Natural killer cell (primary cell): ENCODE measurements at regions of chr12 and their contacts with region 1.

Region 1: GRCh38 chr12:121678716-121679580 is 9.5 kb upstream of the MORN3 start:
- DNase-seq: no peak
- ATAC-seq: no peak
- H3K4me3 ChIP-seq: no peak overlapping the region
- H3K4me3 Mint-ChIP-seq: no peak overlapping the region
- H3K27ac ChIP-seq: no peak overlapping the region
- H3K27ac Mint-ChIP-seq: peak overlapping the region in 1 of 2 donors; percentile 71
- H3K4me1 ChIP-seq: peaks cover 9% of the 10 kb centered on the region
- H3K4me1 Mint-ChIP-seq: peaks cover 0 to 5% of the 10 kb centered on the region in 2 donors
- H3K27me3 ChIP-seq: no peaks in the 10 kb centered on the region
- H3K27me3 Mint-ChIP-seq: no peaks in the 10 kb centered on the region
- CTCF ChIP-seq: no peak

Region 2: DNA sequence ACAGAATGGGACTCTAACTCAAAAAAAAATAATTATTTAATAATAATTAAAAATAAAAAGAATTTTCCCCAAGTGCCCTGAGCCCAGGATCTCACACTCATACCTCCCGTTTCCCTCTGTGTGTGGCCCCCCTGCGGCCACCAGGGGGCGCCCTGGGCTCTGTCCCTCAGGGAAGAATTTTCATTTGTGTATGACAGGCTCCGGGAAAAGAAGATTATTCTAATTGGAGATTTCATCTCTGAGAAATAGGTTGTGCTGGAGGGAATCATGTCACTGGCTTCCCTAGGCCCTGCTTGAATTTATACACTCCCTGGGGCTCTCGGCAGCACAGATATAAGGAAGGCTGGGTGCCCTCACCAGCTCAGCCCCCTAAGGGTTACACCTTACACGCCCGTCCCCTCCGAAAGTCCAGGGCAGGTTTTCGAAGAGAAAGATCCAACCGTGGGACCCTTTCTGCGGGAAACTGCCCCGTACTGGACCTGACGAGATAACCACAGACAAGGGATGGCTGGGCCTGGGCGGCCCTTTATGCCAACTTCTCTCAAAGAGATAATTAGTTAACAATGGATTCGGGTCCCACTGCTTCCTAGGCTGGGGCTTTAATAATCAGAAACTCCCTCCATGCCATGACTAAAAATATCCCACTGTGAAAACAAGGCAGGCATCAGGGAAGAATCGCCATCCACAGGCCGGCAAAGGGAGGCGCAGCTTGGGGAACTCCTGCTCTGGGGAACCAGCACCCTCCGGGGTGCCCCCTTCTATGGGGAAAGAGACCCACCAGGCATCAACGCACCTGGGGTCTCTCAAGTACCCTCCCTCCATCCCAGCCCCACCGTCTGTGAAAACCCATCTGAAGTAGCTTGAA is 178.8 kb before region 1 on chr12:
- intact Hi-C with region 1: loop called (anchors 1 kb)
- DNase-seq: peak; percentile 76 to 87
- ATAC-seq: peak; percentile 74 to 78 (median 75)
- H3K4me3 ChIP-seq: no peak overlapping the region
- H3K4me3 Mint-ChIP-seq: no peak overlapping the region
- H3K27ac ChIP-seq: no peak overlapping the region
- H3K27ac Mint-ChIP-seq: peak overlapping the region in 1 of 2 donors; percentile 59
- H3K4me1 ChIP-seq: peaks cover 57% of the 10 kb centered on the region
- H3K4me1 Mint-ChIP-seq: peaks cover 17 to 36% of the 10 kb centered on the region in 2 donors
- H3K27me3 ChIP-seq: no peaks in the 10 kb centered on the region
- H3K27me3 Mint-ChIP-seq: no peaks in the 10 kb centered on the region
- CTCF ChIP-seq: peak; percentile 98

Region 3: DNA sequence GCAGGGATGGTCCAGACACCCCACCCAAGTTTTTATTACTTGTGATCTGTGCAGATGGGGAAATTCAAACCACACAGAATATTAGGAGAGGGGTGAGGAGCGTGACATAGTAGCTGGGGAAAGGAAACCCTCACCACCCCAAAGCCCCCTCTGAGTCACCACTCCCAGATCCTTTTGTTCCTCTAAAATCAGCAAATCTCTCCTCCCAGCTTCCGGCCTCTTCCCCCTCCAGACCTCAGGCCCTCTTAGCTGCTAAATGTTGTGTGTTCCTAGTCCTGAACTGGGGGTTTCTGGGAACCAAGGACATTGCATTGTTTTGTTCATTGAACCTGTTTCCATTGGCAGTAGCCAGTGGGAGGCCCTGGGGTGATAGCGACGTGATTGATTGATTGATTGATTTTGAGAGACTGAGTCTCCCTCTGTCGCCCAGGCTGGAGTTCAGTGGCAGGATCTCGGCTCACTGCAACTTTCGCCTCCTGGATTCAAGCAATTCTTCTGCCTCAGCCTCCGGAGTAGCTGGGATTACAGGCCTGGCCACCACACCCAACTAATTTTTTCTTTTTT is 58.5 kb before region 1 on chr12:
- intact Hi-C with region 1: no loop called
- DNase-seq: no peak
- ATAC-seq: no peak
- H3K4me3 ChIP-seq: no peak overlapping the region
- H3K4me3 Mint-ChIP-seq: no peak overlapping the region
- H3K27ac ChIP-seq: no peak overlapping the region
- H3K27ac Mint-ChIP-seq: no peak overlapping the region
- H3K4me1 ChIP-seq: peaks cover 19% of the 10 kb centered on the region
- H3K4me1 Mint-ChIP-seq: peaks cover 8 to 11% of the 10 kb centered on the region in 2 donors
- H3K27me3 ChIP-seq: no peaks in the 10 kb centered on the region
- H3K27me3 Mint-ChIP-seq: no peaks in the 10 kb centered on the region
- CTCF ChIP-seq: no peak

Region 4: GRCh38 chr12:121697098-121697698 is 18.2 kb after region 1 on chr12:
- intact Hi-C with region 1: no loop called
- DNase-seq: peak in 1 of 2 donors; percentile 80
- ATAC-seq: peak in 2 of 3 donors; percentile 39 to 49
- H3K4me3 ChIP-seq: no peak overlapping the region
- H3K4me3 Mint-ChIP-seq: no peak overlapping the region
- H3K27ac ChIP-seq: no peak overlapping the region
- H3K27ac Mint-ChIP-seq: no peak overlapping the region
- H3K4me1 ChIP-seq: no peaks in the 10 kb centered on the region
- H3K4me1 Mint-ChIP-seq: no peaks in the 10 kb centered on the region
- H3K27me3 ChIP-seq: no peaks in the 10 kb centered on the region
- H3K27me3 Mint-ChIP-seq: peaks cover 0 to 3% of the 10 kb centered on the region in 2 donors
- CTCF ChIP-seq: peak; percentile 79

Region 5: GRCh38 chr12:121883315-121883660 is 204.3 kb after region 1 on chr12:
- intact Hi-C with region 1: no loop called
- DNase-seq: no peak
- ATAC-seq: no peak
- H3K4me3 ChIP-seq: no peak overlapping the region
- H3K4me3 Mint-ChIP-seq: no peak overlapping the region
- H3K27ac ChIP-seq: no peak overlapping the region
- H3K27ac Mint-ChIP-seq: no peak overlapping the region
- H3K4me1 ChIP-seq: peaks cover 3% of the 10 kb centered on the region
- H3K4me1 Mint-ChIP-seq: peaks cover 2 to 7% of the 10 kb centered on the region in 2 donors
- H3K27me3 ChIP-seq: no peaks in the 10 kb centered on the region
- H3K27me3 Mint-ChIP-seq: no peaks in the 10 kb centered on the region
- CTCF ChIP-seq: no peak